ENCODE measurements at regions of chr3 and their contacts with region 1.

Region 1: DNA sequence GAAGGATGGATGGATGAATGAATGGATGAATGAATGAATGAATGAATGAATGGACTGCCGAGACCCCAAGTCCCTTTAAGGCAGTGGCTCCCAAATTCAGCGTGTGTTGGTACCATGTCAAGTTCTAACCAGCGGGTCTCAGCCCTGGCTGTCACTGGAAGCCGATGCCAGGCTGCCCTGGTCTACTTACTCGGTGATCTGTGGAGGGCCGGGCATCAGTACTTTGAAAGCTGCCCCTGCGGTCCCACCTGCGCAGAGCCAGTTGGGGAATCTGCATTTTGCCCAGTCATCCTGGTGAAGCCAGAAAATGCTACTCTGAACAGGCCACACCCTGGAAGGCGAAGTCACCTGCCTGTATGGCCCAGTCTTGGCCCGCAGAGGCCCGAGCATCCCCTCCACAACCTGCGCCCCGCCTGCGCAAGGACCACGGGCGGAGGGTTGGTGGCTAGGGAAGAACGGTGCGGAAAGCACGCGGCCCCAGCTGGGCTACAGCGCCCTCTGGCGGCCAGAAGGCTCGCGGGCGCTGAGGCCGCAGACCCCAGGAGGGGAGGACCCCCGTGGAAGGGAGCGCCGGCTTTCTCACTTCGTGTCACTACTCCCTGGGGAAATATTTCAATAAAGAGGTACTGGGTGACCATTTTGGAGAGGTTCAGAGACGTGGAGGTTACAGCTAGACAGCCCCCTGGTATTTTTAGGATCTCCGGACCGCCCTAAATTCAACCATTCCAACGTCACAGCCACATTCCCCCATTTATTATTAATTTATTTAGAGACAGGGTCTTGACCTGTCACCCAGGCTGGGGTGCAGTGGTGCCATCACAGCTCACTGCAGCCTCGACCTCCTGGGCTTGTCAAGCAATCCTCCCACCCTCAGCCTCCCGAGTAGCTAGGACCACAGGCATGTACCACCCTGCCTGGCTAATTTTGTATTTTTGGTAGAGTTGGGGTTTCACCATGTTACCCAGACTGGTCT is 34.9 kb downstream of the PRKCD start:
- DNase-seq: no peak
- H3K4me3 ChIP-seq: no peak overlapping the region
- H3K27ac ChIP-seq: no peak overlapping the region
- H3K4me1 ChIP-seq: peaks cover 25 to 37% (median 33%) of the 10 kb centered on the region in 4 donors
- H3K27me3 ChIP-seq: no peaks in the 10 kb centered on the region
- CTCF ChIP-seq: peak in 2 of 3 experiments; percentile 93 to 100
- EP300 ChIP-seq: no peak
- POLR2A ChIP-seq: no peak

Region 2: DNA sequence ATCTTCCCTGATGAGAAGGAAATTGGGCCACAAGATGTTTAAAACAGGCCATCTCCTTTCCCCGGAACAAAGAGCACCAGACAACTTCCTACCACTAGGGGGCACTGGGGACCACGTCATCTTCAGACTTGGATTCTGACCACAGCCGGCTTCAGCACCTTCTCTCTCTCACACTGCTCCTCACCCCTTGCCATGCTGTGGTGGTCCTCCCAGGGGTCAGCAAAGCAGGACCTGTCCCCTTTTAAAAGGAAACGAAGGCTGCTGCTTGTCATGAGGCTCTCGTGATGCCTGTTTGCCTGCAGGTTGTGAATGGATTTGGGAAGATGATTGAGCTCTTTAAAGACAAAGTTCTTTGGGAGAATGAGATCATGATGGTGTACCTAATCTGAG is 81.9 kb before region 1 on chr3:
- intact Hi-C with region 1: loop called (anchors 1 kb)
- DNase-seq: peak; percentile 96
- H3K4me3 ChIP-seq: no peak overlapping the region
- H3K27ac ChIP-seq: peak overlapping the region; percentile 41 to 75 (median 70)
- H3K4me1 ChIP-seq: peaks cover 9 to 41% (median 35%) of the 10 kb centered on the region in 4 donors
- H3K27me3 ChIP-seq: no peaks in the 10 kb centered on the region
- CTCF ChIP-seq: peak; percentile 87 to 91 (median 88)
- EP300 ChIP-seq: no peak
- POLR2A ChIP-seq: no peak

Region 3: GRCh38 chr3:53130179-53131061 is 65.5 kb before region 1 on chr3 and contains the start of gene RFT1:
- intact Hi-C with region 1: loop called (anchors 5 kb)
- DNase-seq: peak; percentile 100
- H3K4me3 ChIP-seq: peak within 1 kb of the TSS; percentile 70 to 93 (median 80)
- H3K27ac ChIP-seq: peak within 1 kb of the TSS; percentile 84 to 93 (median 88)
- H3K4me1 ChIP-seq: peaks cover 15 to 42% (median 33%) of the 10 kb centered on the region in 4 donors
- H3K27me3 ChIP-seq: no peaks in the 10 kb centered on the region
- CTCF ChIP-seq: peak in 2 of 3 experiments; percentile 6 to 44
- EP300 ChIP-seq: no peak
- POLR2A ChIP-seq: peak; percentile 25
- total RNA-seq, gene RFT1: 6.8 to 10.3 (median 9.0) TPM

Measured in esophagus muscularis mucosa (tissue), 4 donors.